Natural killer cell (primary cell): ENCODE measurements at regions of chr7 and their contacts with region 1.

Region 1: GRCh38 chr7:127858091-127858914 is 172.9 kb downstream of the LRRC4 start:
- DNase-seq: no peak
- ATAC-seq: no peak
- H3K4me3 ChIP-seq: no peak overlapping the region
- H3K4me3 Mint-ChIP-seq: peak overlapping the region; percentile 31
- H3K27ac ChIP-seq: no peak overlapping the region
- H3K27ac Mint-ChIP-seq: peak overlapping the region in 1 of 2 donors; percentile 63
- H3K4me1 ChIP-seq: peaks cover 24% of the 10 kb centered on the region
- H3K4me1 Mint-ChIP-seq: peaks cover 45 to 46% of the 10 kb centered on the region in 2 donors
- H3K27me3 ChIP-seq: peaks cover 3% of the 10 kb centered on the region
- H3K27me3 Mint-ChIP-seq: peaks cover 10 to 34% of the 10 kb centered on the region in 2 donors
- CTCF ChIP-seq: no peak

Region 2: DNA sequence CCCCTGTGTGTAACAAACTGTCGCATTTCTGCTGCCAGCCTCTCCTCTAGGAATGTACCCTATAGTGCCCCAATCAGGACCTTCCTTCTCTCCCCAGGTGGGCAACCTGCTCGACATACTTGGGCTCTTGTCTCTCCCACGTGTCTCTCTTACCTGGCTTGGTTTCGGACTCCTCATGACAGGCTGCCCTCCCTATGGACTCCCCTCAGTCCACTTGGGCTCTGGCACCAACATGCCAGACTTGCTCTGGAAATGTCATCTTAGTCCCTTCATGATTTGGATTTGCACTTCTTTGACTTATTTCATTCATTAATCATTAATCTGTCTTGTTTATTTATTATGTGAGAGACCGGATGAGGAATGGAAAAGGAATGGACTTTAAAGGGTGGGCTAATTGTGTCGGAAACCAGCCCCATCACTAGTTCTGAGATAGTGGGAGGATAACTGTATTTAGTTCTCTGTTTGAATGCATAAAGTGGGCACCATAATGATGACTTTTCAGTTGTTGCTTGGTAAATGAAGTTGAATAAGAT is 98.3 kb before region 1 on chr7:
- intact Hi-C with region 1: loop called (anchors 5 kb)
- DNase-seq: no peak
- ATAC-seq: no peak
- H3K4me3 ChIP-seq: no peak overlapping the region
- H3K4me3 Mint-ChIP-seq: peak overlapping the region; percentile 82
- H3K27ac ChIP-seq: no peak overlapping the region
- H3K27ac Mint-ChIP-seq: peak overlapping the region; percentile 83 to 90
- H3K4me1 ChIP-seq: peaks cover 28% of the 10 kb centered on the region
- H3K4me1 Mint-ChIP-seq: peaks cover 89 to 93% of the 10 kb centered on the region in 2 donors
- H3K27me3 ChIP-seq: no peaks in the 10 kb centered on the region
- H3K27me3 Mint-ChIP-seq: no peaks in the 10 kb centered on the region
- CTCF ChIP-seq: no peak

Region 3: DNA sequence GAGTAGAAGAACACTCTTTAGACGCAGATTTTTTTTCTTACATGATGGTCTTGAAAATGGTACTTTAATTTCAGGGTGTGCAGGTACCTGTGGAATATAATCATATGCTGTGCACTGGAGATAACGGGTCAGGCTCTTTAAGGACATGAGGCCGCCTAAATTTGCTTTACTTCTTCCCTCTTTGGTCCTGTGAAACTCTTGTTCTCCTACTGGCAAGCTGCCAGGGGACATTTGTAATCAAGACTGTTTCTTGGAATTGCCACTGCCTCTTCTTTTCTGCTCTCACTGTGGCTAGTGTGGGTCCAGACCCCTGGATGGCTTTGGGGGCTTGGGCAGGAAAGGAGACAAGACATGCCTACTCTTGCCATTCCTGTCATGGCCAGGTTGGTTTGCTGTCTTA is 60.3 kb before region 1 on chr7:
- intact Hi-C with region 1: no loop called
- DNase-seq: no peak
- ATAC-seq: no peak
- H3K4me3 ChIP-seq: no peak overlapping the region
- H3K4me3 Mint-ChIP-seq: no peak overlapping the region
- H3K27ac ChIP-seq: no peak overlapping the region
- H3K27ac Mint-ChIP-seq: no peak overlapping the region
- H3K4me1 ChIP-seq: no peaks in the 10 kb centered on the region
- H3K4me1 Mint-ChIP-seq: peaks cover 20 to 25% of the 10 kb centered on the region in 2 donors
- H3K27me3 ChIP-seq: no peaks in the 10 kb centered on the region
- H3K27me3 Mint-ChIP-seq: no peaks in the 10 kb centered on the region
- CTCF ChIP-seq: no peak

Region 4: DNA sequence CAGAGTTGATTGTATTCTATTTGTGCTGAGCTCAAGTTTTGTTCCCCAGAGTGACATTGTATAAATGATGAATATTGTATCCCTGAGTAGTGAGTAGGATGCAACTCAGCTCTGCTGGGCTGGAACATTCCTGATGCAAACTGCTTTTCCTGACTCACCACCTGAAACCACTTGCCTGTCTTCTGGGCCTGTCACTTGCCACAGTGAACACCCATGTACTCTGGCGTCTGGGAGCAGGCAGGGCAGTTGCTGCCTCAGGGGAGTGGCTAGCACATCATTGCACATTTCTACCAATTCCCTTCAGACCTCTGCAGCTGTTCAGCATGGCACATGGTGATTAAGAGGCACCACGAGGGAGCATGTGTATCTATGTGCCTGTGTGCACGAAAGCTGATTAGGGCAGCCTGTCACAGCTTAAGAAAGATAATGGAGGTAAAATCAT is 49.0 kb before region 1 on chr7:
- intact Hi-C with region 1: no loop called
- DNase-seq: no peak
- ATAC-seq: no peak
- H3K4me3 ChIP-seq: no peak overlapping the region
- H3K4me3 Mint-ChIP-seq: no peak overlapping the region
- H3K27ac ChIP-seq: no peak overlapping the region
- H3K27ac Mint-ChIP-seq: peak overlapping the region in 1 of 2 donors; percentile 36
- H3K4me1 ChIP-seq: no peaks in the 10 kb centered on the region
- H3K4me1 Mint-ChIP-seq: peaks cover 26 to 67% of the 10 kb centered on the region in 2 donors
- H3K27me3 ChIP-seq: no peaks in the 10 kb centered on the region
- H3K27me3 Mint-ChIP-seq: no peaks in the 10 kb centered on the region
- CTCF ChIP-seq: no peak